Psoas muscle (tissue), 8 donors: ENCODE measurements at regions of chr3 and their contacts with region 1.

Region 1: DNA sequence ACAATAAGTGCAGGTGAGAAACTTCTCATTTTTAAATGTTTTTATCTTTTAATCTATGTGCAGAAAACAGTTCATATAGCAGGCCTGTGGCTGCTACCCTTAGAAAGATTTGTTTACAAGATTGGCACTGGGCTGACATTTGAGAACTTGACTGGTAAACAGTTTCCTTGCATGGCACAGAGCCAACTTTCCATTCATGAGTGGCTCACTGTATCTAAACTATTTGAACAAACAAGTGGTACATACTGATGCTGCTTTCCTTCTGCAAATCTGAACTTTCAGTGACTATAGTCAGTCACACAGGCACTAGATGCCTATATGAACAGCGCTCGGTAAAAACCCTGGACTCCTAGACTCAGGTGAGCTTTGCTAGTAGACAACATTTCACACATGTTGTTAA is 6.3 kb upstream of the GTPBP8 start:
- DNase-seq: no peak
- ATAC-seq: peak in 1 of 4 donors; percentile 67
- H3K4me3 ChIP-seq: no peak overlapping the region
- H3K27ac ChIP-seq: no peak overlapping the region
- H3K4me1 ChIP-seq: peaks cover 9% of the 10 kb centered on the region
- H3K27me3 ChIP-seq: no peaks in the 10 kb centered on the region
- CTCF ChIP-seq: no peak

Region 2: GRCh38 chr3:112561731-112562688 is 422.5 kb before region 1 on chr3 and contains the starts of genes ATG3 and SLC35A5:
- intact Hi-C with region 1: loop called in 1 of 2 experiments (anchors 10 kb)
- DNase-seq: peak; percentile 99
- ATAC-seq: peak; percentile 96 to 98 (median 98)
- H3K4me3 ChIP-seq: peak within 1 kb of the TSS; percentile 81
- H3K27ac ChIP-seq: peak within 1 kb of the TSS; percentile 94
- H3K4me1 ChIP-seq: peaks cover 30% of the 10 kb centered on the region
- H3K27me3 ChIP-seq: no peaks in the 10 kb centered on the region
- CTCF ChIP-seq: no peak
- total RNA-seq, gene ATG3: 27.9 to 38.7 (median 31.7) TPM
- total RNA-seq, gene SLC35A5: 9.3 to 12.6 (median 10.5) TPM

Region 3: DNA sequence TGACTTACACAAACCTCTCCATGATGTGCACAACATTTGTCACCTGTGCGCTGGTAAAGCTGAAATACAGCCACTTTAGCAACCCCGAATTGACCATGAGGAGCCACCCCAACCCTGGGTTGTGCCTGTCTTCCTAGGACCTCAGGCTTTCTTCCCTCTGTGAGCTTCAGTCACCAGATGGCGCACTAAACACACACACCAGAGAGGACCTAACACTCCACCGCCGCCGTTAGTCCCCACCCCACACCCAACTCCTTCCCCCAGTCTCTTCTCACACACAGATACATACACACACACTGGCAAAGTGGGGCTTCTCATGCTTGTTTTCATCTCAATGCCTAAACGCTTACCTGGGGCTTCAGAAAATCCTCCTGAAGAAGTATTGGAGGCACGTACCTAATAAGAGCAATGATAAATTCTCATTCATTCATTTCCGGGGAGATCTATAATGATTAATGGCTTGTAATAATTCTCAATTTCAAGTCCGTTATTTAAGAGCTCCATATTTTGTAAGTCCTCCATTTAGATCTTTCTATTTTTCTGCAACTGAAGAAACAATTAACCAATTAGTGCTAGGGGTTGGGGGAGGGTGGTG is 341.5 kb before region 1 on chr3:
- intact Hi-C with region 1: loop called (anchors 2 to 5 kb)
- DNase-seq: peak; percentile 78 to 80
- ATAC-seq: peak; percentile 79 to 89 (median 83)
- H3K4me3 ChIP-seq: peak overlapping the region; percentile 31
- H3K27ac ChIP-seq: no peak overlapping the region
- H3K4me1 ChIP-seq: peaks cover 18% of the 10 kb centered on the region
- H3K27me3 ChIP-seq: no peaks in the 10 kb centered on the region
- CTCF ChIP-seq: peak; percentile 72

Region 4: DNA sequence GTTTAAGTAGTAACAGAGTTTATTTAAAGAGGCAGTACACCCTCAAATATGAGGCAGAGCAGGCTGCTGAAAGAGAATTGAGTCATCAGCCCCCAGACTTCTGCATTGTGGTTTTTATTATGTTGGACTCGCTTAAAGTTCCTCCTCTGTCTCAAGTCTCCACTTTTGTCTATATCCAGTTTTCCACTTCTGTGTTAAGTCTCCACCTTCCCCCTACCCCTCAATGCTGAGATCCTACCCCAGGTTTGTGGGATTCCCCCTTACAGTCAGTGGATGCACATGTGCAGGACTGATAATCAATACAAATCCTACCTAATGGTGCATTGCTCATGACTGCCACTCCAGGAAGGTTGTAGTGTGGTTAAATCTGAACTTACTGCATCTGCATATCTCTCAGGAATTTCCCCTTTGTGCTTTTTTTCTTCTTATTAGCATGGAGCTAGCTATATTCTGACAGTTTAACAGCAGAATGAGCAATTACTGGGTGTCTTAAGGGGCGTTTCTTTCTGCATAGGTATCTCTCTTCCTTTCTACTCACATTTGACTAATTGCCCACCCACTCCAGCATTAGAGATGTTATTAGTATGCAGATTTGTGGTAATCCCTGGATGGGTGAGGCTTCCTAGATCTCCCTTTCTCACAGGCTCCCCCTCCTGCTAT is 125.9 kb before region 1 on chr3:
- intact Hi-C with region 1: no loop called
- DNase-seq: no peak
- ATAC-seq: no peak
- H3K4me3 ChIP-seq: no peak overlapping the region
- H3K27ac ChIP-seq: no peak overlapping the region
- H3K4me1 ChIP-seq: no peaks in the 10 kb centered on the region
- H3K27me3 ChIP-seq: no peaks in the 10 kb centered on the region
- CTCF ChIP-seq: no peak